ENCODE measurements at regions of chr13 and their contacts with region 1.

Region 1: DNA sequence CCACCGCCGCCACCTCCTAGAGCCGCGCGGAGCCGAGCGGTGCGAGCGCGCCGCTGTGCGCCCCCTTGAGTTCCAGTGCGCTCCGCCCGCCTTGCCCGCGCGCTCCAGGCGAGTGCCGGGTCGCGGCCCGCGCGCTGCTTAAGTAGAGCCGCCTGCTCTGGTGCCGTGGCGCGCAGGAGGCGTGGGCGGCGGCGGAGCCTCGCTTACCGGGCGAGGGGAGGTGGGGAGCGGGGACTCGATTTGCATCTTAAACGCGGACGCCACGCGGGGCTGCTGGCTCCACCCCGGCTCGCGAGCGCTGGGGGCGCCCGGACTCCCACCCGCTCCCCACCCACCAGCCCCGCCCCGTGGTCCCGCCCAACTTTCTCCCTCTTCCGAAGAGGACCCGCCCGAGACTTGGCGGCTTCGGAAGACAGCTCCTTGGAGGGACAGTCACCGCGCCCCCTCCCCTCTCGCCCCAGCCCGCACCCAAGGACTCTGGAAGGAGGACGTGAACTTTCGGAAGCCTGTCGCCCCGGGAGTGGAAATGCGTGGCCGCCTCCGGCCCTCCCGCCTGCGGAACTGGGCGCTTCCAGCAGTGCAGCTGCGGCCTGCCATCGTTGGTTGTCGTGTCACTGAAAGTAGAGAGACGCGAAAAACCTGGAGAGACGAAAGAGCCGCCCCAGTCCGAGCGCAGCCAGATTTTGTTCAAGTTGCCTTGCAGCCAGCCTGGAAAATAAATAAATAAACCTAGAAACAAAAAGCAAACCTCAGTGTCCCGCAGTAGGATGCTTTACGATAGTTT is at the start of gene KCTD12:
- DNase-seq: peak; percentile 63 to 82
- H3K4me3 ChIP-seq: peak within 1 kb of the TSS; percentile 56
- H3K4me3 Mint-ChIP-seq: peak within 1 kb of the TSS; percentile 79
- H3K27ac Mint-ChIP-seq: peak within 1 kb of the TSS; percentile 35
- H3K4me1 ChIP-seq: 0 out of 2 replicates have a peak, but pooled peaks cover 15% of the 10 kb centered on the region
- H3K4me1 Mint-ChIP-seq: peaks cover 14% of the 10 kb centered on the region
- H3K27me3 ChIP-seq: no peaks in the 10 kb centered on the region; the same call in 1 of the 2 replicates
- H3K27me3 Mint-ChIP-seq: peaks cover 30% of the 10 kb centered on the region
- CTCF ChIP-seq: peak in 1 of 2 experiments; percentile 30
- total RNA-seq, gene KCTD12: 1.8 and 3.2 TPM in 2 replicates

Region 2: GRCh38 chr13:76667551-76667950 is 218.9 kb before region 1 on chr13:
- CTCF ChIA-PET with region 1: interaction called, 3 read pairs
- POLR2A ChIA-PET with region 1: no interaction called
- intact Hi-C with region 1: loop called (anchors 5 kb)
- DNase-seq: peak in 1 of 2 experiments; percentile 6
- H3K4me3 ChIP-seq: no peak overlapping the region
- H3K4me3 Mint-ChIP-seq: no peak overlapping the region
- H3K27ac Mint-ChIP-seq: no peak overlapping the region
- H3K4me1 ChIP-seq: no peaks in the 10 kb centered on the region
- H3K4me1 Mint-ChIP-seq: no peaks in the 10 kb centered on the region
- H3K27me3 ChIP-seq: no peaks in the 10 kb centered on the region
- H3K27me3 Mint-ChIP-seq: peaks cover 8% of the 10 kb centered on the region
- CTCF ChIP-seq: peak in 1 of 2 experiments; percentile 9

Region 3: GRCh38 chr13:76822698-76823267 is 63.7 kb before region 1 on chr13:
- CTCF ChIA-PET with region 1: interaction called, 9 read pairs
- POLR2A ChIA-PET with region 1: no interaction called
- intact Hi-C with region 1: loop called (anchors 1 kb)
- DNase-seq: no peak
- H3K4me3 ChIP-seq: no peak overlapping the region
- H3K4me3 Mint-ChIP-seq: no peak overlapping the region
- H3K27ac Mint-ChIP-seq: no peak overlapping the region
- H3K4me1 ChIP-seq: no peaks in the 10 kb centered on the region
- H3K4me1 Mint-ChIP-seq: no peaks in the 10 kb centered on the region
- H3K27me3 ChIP-seq: no peaks in the 10 kb centered on the region
- H3K27me3 Mint-ChIP-seq: peaks cover 3% of the 10 kb centered on the region
- CTCF ChIP-seq: peak in 1 of 2 experiments; percentile 18